Posterior vena cava (tissue), 2 donors: ENCODE measurements at regions of chr9 and their contacts with region 1.

Region 1: DNA sequence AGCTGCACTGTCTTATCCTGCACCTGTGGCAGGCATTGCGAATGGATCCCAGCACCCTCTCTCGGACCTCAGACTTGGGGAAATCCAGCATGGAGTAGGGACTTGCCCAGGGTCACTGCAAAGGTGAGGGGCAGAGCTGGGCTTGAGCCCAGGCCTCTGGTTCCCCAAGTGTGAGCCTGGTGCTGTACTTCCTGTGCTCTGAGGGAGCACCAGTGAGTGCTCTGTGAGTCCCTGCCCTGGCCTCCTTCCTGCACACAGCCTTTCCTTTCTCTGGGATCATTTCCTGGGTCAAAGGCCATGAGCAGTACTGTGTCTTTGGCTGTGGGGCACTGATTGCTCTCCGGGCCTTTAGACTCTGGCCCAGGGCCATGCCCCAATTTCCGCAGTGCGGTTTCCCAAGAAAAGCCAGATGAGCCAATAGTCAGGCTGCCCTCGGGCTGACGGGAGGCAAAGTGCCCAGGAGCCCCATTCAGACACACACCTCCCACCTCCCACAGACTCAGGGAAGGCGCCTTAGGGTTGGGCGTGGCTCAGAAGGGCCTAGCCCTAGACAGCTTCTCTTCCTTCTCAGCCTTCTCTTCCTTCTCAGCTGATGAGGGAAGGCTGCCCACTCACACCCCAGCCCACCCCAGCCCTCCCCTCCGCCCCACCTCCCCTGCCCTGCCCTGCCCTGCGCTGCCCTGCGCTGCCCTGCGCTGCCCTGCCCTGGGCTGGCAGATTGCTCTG is 23.3 kb upstream of the TRIM14 start:
- DNase-seq: no peak

Region 2: DNA sequence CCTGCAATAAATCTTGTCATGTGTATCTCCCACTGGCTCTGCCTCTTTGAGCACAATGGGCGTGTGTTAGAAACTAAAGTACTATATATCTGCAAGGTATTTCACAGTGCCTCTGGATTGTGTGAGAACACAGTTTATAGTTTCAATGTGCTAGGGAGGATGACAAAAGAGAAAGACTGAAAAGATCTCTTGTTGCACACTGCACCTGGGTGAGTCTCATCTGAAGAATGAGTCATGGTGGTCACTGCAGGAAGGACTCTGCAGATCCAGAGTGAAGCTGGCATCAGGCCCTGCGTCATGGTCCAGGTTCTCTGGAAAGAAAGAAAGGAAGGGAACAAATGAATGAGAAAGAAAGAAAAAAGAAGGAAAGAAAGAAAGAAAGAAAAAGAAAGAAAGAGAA is 1082.7 kb before region 1 on chr9:
- intact Hi-C with region 1: loop called in 1 of 2 experiments (anchors 5 kb)
- DNase-seq: no peak